Activated CD4-positive, alpha-beta memory T cell treated with anti-CD3 and anti-CD28 coated beads, Interleukin-2, amount 10 ng/mL, durations not matched to agents 7 days and 5 days (primary cell): ENCODE measurements at regions of chr14 and their contacts with region 1.

Region 1: GRCh38 chr14:73491256-73492042 is 716 bp downstream of the RIOX1 start:
- DNase-seq: peak; percentile 79
- H3K4me3 Mint-ChIP-seq: peak overlapping the region; percentile 81
- H3K27ac Mint-ChIP-seq: peak overlapping the region; percentile 74
- H3K4me1 Mint-ChIP-seq: peaks cover 45% of the 10 kb centered on the region
- H3K27me3 Mint-ChIP-seq: peaks cover 12% of the 10 kb centered on the region

Region 2: GRCh38 chr14:73283608-73284379 is 207.7 kb before region 1 on chr14:
- CTCF ChIA-PET with region 1: no interaction called
- POLR2A ChIA-PET with region 1: no interaction called
- DNase-seq: no peak
- H3K4me3 Mint-ChIP-seq: no peak overlapping the region
- H3K27ac Mint-ChIP-seq: no peak overlapping the region
- H3K4me1 Mint-ChIP-seq: peaks cover 7% of the 10 kb centered on the region
- H3K27me3 Mint-ChIP-seq: no peaks in the 10 kb centered on the region

Region 3: DNA sequence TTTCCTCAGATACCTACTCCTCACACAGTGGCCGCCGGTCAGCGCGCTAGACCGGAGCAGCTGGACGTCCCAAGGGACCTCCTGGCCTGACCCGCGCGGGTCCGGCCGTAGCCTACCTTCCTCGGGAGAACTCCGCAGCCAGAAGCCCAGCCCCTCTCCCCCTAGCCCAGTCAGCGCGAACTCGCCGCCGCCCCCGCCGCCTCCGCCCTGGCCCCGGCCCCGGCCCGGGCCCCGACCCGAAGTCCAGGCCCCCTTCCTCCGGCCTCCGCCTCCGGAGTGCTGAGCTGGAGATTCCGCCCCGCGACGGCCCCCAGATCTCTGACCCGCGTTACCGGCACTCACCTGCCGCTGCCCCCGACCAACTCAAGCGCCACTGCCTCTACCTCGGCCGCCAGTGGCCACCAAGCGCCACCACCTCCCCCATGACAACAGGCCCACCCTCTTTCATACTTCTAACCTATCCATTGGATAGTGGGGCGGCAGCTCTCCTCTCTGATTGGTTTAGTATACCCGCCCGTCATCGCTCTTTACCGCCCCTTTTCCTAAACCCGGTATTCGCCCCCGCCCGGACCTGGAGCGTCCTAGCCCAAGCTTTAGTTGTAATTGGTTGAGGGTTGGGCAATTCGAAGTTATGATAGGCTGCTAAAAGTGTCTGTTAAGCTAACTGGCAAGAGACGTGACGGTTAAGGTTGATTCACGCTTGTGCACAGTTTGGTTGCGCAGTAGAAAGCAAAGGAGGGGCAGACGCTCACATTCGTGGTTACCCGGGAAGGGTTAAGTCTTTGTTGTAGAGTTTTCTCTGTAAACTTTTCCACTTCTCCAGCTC is 33.1 kb before region 1 on chr14 and contains the start of gene NUMB:
- CTCF ChIA-PET with region 1: no interaction called
- POLR2A ChIA-PET with region 1: interaction called, 21 read pairs
- DNase-seq: peak; percentile 98
- H3K4me3 Mint-ChIP-seq: peak within 1 kb of the TSS; percentile 91
- H3K27ac Mint-ChIP-seq: peak within 1 kb of the TSS; percentile 81
- H3K4me1 Mint-ChIP-seq: peaks cover 43% of the 10 kb centered on the region
- H3K27me3 Mint-ChIP-seq: no peaks in the 10 kb centered on the region
- total RNA-seq, gene NUMB: 44.5 to 46.4 TPM

Region 4: DNA sequence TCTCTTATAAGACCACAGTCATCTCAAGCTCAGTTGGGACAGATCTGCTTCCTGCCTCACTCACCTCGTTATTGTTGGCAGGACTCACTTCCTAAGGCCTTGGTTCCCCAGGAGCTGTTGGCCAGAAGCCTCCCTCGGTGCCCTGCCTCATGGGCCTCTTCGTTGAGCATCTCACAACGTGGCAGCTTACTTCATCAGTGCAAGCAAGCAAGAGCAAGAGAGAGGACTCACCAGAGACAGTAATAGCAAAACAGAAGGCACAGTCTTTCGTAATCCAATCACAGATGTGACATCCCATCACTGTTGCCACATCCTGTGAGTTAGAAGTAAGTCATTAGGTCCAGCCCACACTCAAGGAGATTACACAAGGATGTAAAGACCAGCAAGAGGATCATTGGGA is 28.0 kb before region 1 on chr14:
- CTCF ChIA-PET with region 1: interaction called, 3 read pairs
- POLR2A ChIA-PET with region 1: interaction called, 21 read pairs
- DNase-seq: peak; percentile 54
- H3K4me3 Mint-ChIP-seq: peak overlapping the region; percentile 22
- H3K27ac Mint-ChIP-seq: peak overlapping the region; percentile 81
- H3K4me1 Mint-ChIP-seq: peaks cover 60% of the 10 kb centered on the region
- H3K27me3 Mint-ChIP-seq: no peaks in the 10 kb centered on the region

Region 5: DNA sequence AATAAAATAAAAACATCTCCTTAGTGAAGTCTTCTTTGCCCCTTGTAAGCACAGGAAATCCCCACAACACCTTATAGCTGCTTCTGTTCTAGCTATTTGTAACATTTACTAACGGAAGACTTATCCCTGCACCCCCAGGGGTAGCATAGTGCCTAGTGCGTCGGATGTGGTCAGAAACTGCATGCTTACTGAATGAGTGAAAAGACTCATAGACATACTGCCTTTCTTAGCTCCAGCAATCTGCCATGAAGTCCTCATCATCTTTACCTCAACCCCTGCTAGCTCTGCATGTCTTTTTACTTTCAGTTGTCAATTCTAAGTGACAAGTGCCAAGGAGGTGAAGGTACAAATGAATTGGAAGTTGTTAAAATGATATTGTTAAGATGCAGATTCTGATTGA is 12.2 kb after region 1 on chr14:
- CTCF ChIA-PET with region 1: interaction called, 7 read pairs
- POLR2A ChIA-PET with region 1: interaction called, 20 read pairs
- DNase-seq: no peak
- H3K4me3 Mint-ChIP-seq: no peak overlapping the region
- H3K27ac Mint-ChIP-seq: no peak overlapping the region
- H3K4me1 Mint-ChIP-seq: peaks cover 4% of the 10 kb centered on the region
- H3K27me3 Mint-ChIP-seq: no peaks in the 10 kb centered on the region